ENCODE measurements at regions of chr5 and their contacts with region 1.

Region 1: GRCh38 chr5:143968011-143968878 is 156.3 kb downstream of the HMHB1 start:
- DNase-seq: peak; percentile 34
- ATAC-seq: peak; percentile 86
- H3K4me3 ChIP-seq: no peak overlapping the region
- H3K27ac ChIP-seq: no peak overlapping the region
- H3K4me1 ChIP-seq: no peaks in the 10 kb centered on the region
- H3K27me3 ChIP-seq: no peaks in the 10 kb centered on the region; a peak in 1 of 4 replicates
- CTCF ChIP-seq: peak; percentile 46 to 63 (median 56); a peak in 5 of 6 replicates
- EP300 ChIP-seq: no peak
- POLR2A ChIP-seq: no peak
- RAD21 ChIP-seq: peak; percentile 69

Region 2: GRCh38 chr5:142915813-142916424 is 1052.3 kb before region 1 on chr5:
- CTCF ChIA-PET with region 1: interaction called, 31 read pairs
- POLR2A ChIA-PET with region 1: no interaction called
- RAD21 ChIA-PET with region 1: no interaction called
- SMC1A ChIA-PET with region 1: interaction called, 11 read pairs
- in situ Hi-C with region 1: loop called (anchors 5 kb)
- intact Hi-C with region 1: loop called (anchors 5 kb)
- DNase-seq: peak; percentile 51
- ATAC-seq: peak; percentile 99
- H3K4me3 ChIP-seq: no peak overlapping the region
- H3K27ac ChIP-seq: no peak overlapping the region
- H3K4me1 ChIP-seq: peaks cover 11% of the 10 kb centered on the region; the same call in 1 of the 2 replicates
- H3K27me3 ChIP-seq: no peaks in the 10 kb centered on the region
- CTCF ChIP-seq: peak; percentile 66 to 75 (median 70)
- EP300 ChIP-seq: peak in 1 of 2 experiments; percentile 54; a peak in 1 of 4 replicates
- POLR2A ChIP-seq: no peak
- RAD21 ChIP-seq: peak; percentile 62

Region 3: GRCh38 chr5:143314659-143315058 is 653.6 kb before region 1 on chr5:
- CTCF ChIA-PET with region 1: interaction called, 3 read pairs
- POLR2A ChIA-PET with region 1: no interaction called
- RAD21 ChIA-PET with region 1: no interaction called
- SMC1A ChIA-PET with region 1: no interaction called
- in situ Hi-C with region 1: no loop called
- intact Hi-C with region 1: loop called (anchors 2 kb)
- DNase-seq: no peak
- ATAC-seq: peak; percentile 61
- H3K4me3 ChIP-seq: no peak overlapping the region
- H3K27ac ChIP-seq: 0 out of 2 replicates have a peak overlapping the region, but pooled peaks have one; percentile 7
- H3K4me1 ChIP-seq: peaks cover 16% of the 10 kb centered on the region; the same call in 1 of the 2 replicates
- H3K27me3 ChIP-seq: no peaks in the 10 kb centered on the region
- CTCF ChIP-seq: no peak
- EP300 ChIP-seq: no peak
- POLR2A ChIP-seq: no peak
- RAD21 ChIP-seq: no peak

Region 4: GRCh38 chr5:143648696-143649095 is 319.5 kb before region 1 on chr5:
- CTCF ChIA-PET with region 1: interaction called, 3 read pairs
- POLR2A ChIA-PET with region 1: no interaction called
- RAD21 ChIA-PET with region 1: no interaction called
- SMC1A ChIA-PET with region 1: no interaction called
- in situ Hi-C with region 1: no loop called
- intact Hi-C with region 1: loop called (anchors 10 kb)
- DNase-seq: no peak
- ATAC-seq: 0 out of 3 replicates have a peak, but pooled peaks have one; percentile 10
- H3K4me3 ChIP-seq: no peak overlapping the region
- H3K27ac ChIP-seq: no peak overlapping the region
- H3K4me1 ChIP-seq: peaks cover 4% of the 10 kb centered on the region; the same call in 1 of the 2 replicates
- H3K27me3 ChIP-seq: no peaks in the 10 kb centered on the region
- CTCF ChIP-seq: peak in 2 of 3 experiments; percentile 16 to 22; a peak in 2 of 6 replicates
- EP300 ChIP-seq: no peak
- POLR2A ChIP-seq: no peak
- RAD21 ChIP-seq: peak; percentile 34; the same call in 1 of the 2 replicates

Region 5: DNA sequence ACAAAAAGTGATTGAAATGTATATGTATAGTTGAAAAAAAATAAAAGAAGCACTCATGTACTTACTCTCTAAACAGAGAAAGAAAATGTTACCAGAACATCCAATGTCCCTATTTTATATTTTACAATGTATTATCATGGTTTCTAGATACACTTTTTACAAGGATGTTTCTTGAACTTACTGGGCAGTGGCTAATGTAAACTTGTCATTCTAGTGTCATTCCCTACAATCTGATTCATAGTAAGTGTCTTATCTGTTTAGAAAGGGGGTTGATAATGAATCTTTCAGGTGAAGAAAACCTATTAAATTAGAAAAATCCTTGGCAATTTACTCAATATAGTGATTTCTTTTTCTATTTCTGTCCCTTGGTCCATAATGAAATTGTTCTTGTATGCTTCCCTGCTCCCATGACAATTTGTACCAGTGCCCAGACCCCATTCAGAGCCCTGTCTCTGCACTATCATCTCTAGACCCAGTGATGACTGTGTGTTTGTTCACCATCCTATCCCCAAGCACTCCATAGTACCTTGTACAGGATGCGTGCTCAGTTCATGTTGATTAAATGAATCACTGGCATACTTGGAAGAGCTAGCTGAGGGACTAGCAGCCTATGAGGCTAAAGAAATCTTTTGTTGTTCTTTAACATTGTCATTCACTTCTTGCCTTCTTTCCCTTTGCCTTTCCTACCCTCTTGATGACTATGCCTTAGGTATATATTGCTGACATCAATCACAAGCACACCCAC is 55.1 kb before region 1 on chr5:
- CTCF ChIA-PET with region 1: no interaction called
- POLR2A ChIA-PET with region 1: no interaction called
- RAD21 ChIA-PET with region 1: no interaction called
- SMC1A ChIA-PET with region 1: no interaction called
- in situ Hi-C with region 1: no loop called
- intact Hi-C with region 1: no loop called
- DNase-seq: no peak
- ATAC-seq: no peak
- H3K4me3 ChIP-seq: no peak overlapping the region
- H3K27ac ChIP-seq: no peak overlapping the region
- H3K4me1 ChIP-seq: no peaks in the 10 kb centered on the region
- H3K27me3 ChIP-seq: no peaks in the 10 kb centered on the region
- CTCF ChIP-seq: no peak
- EP300 ChIP-seq: no peak
- POLR2A ChIP-seq: no peak
- RAD21 ChIP-seq: no peak

Region 6: DNA sequence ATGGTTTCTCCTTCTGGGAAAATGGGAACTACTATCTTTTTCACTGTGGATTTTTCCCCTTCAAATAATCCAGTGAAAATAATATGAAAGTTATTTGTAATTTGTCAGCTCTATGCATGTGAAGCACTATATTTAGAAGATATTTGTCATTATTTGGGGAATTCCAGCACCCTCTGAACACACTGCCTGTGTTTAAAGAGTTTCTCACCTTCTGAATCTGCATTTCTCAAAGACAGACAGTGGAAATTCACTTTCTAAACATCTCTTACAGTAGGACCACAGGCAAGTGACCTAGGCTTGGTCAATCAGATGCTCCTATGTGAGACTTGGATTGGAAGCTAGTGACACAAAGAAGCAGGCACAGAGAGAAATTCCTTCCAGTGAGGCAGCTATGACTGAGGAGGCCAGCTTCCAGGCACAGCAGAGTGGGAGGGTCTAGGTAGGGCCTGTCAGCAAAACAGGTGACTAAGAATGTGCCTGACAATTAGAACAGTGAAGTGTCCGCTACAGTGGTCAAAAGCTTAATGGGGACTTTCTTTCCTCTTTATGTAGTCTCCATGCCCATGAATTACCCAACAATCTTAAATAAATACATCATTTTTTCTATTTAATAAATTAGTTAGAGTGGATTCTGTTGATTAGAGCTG is 10.9 kb after region 1 on chr5:
- CTCF ChIA-PET with region 1: interaction called, 34 read pairs
- POLR2A ChIA-PET with region 1: interaction called, 6 read pairs
- RAD21 ChIA-PET with region 1: interaction called, 23 read pairs
- SMC1A ChIA-PET with region 1: interaction called, 28 read pairs
- in situ Hi-C with region 1: no loop called
- intact Hi-C with region 1: no loop called
- DNase-seq: no peak
- ATAC-seq: peak; percentile 92
- H3K4me3 ChIP-seq: no peak overlapping the region
- H3K27ac ChIP-seq: peak overlapping the region; percentile 6; the same call in 1 of the 2 replicates
- H3K4me1 ChIP-seq: no peaks in the 10 kb centered on the region
- H3K27me3 ChIP-seq: no peaks in the 10 kb centered on the region
- CTCF ChIP-seq: no peak
- EP300 ChIP-seq: 0 out of 4 replicates have a peak, but pooled peaks of 1 of the 2 experiments have one; percentile 11
- POLR2A ChIP-seq: no peak
- RAD21 ChIP-seq: no peak

Region 7: DNA sequence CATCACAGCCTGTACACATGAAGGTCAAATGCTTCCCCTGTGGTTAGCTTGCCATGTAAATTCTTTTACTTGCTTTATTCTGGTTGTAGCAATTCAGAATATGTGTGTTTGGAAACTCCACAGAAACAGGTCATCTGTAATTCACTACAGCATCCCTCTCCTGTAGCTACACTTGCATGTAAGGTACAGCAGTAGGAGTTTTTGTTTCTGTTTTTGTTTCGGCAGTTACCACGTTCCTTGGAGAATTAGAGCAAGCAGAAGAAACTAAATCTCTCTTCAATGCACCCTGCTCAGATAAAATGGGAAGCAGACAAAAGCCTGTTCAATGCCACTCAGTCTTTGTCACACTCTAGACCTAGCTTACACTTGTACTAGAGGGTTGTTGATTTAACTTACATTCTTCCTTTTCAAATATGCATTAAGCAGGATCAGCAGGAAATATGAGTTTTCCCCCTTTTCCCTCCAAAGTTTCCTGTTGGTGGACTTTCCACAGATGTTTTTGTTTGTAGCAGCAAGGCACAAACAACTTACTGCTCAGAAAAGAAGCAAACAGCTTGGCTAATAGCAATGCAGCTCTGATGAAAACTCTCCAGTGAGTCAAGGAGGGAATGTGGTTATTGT is 121.3 kb after region 1 on chr5:
- CTCF ChIA-PET with region 1: no interaction called
- POLR2A ChIA-PET with region 1: no interaction called
- RAD21 ChIA-PET with region 1: no interaction called
- SMC1A ChIA-PET with region 1: no interaction called
- in situ Hi-C with region 1: no loop called
- intact Hi-C with region 1: no loop called
- DNase-seq: no peak
- ATAC-seq: peak; percentile 24
- H3K4me3 ChIP-seq: no peak overlapping the region
- H3K27ac ChIP-seq: no peak overlapping the region
- H3K4me1 ChIP-seq: no peaks in the 10 kb centered on the region
- H3K27me3 ChIP-seq: no peaks in the 10 kb centered on the region
- CTCF ChIP-seq: no peak
- EP300 ChIP-seq: no peak
- POLR2A ChIP-seq: no peak
- RAD21 ChIP-seq: no peak

Region 8: GRCh38 chr5:144142139-144142823 is 174.0 kb after region 1 on chr5:
- CTCF ChIA-PET with region 1: interaction called, 10 read pairs
- POLR2A ChIA-PET with region 1: no interaction called
- RAD21 ChIA-PET with region 1: interaction called, 6 read pairs
- SMC1A ChIA-PET with region 1: interaction called, 9 read pairs
- in situ Hi-C with region 1: no loop called
- intact Hi-C with region 1: loop called (anchors 5 kb)
- DNase-seq: peak; percentile 25
- ATAC-seq: peak; percentile 99
- H3K4me3 ChIP-seq: no peak overlapping the region
- H3K27ac ChIP-seq: no peak overlapping the region
- H3K4me1 ChIP-seq: peaks cover 11% of the 10 kb centered on the region
- H3K27me3 ChIP-seq: no peaks in the 10 kb centered on the region; a peak in 1 of 4 replicates
- CTCF ChIP-seq: peak; percentile 64 to 71 (median 69)
- EP300 ChIP-seq: no peak
- POLR2A ChIP-seq: no peak
- RAD21 ChIP-seq: peak; percentile 83

Region 9: DNA sequence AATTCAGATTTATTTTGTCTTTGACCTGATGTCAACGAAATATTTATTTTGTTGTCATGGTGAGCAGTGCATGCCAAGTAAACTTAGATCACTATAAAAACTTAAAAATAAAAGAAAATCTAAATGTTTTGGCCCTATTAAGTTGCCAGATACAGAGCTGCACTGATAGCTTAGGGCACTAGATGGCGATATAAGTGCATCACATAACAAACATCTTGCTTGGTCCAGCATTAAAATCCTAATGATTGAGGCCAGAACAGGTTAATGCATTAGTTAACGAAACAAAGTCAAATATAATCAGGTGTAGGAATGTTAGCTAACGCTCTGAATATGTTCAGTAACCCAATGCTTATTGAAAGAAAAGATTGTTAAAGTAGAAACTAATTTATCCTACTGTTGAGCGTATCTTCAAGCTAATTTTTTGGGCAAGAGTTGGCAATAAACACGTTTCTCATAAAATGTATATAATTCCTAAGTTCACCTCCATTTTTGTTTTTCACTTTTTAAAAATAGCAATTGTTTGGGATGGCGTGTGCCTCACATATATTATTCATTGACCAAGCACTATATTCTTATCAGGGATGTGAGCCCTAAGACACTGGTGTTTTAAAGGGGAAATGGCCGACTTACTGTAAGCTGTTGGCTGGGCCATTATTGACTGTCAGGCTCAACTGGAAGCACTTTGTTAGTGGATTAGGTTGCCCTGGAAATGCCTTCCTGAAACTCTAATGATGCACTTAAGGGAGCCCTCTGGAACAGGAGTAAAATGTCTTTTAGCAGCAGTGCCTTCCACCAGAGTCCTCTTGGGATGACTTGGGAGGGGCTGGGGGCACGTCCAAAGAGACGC is 235.7 kb after region 1 on chr5:
- CTCF ChIA-PET with region 1: no interaction called
- POLR2A ChIA-PET with region 1: no interaction called
- RAD21 ChIA-PET with region 1: no interaction called
- SMC1A ChIA-PET with region 1: no interaction called
- in situ Hi-C with region 1: no loop called
- intact Hi-C with region 1: no loop called
- DNase-seq: no peak
- ATAC-seq: peak; percentile 92
- H3K4me3 ChIP-seq: no peak overlapping the region
- H3K27ac ChIP-seq: no peak overlapping the region
- H3K4me1 ChIP-seq: no peaks in the 10 kb centered on the region
- H3K27me3 ChIP-seq: peaks cover 1 to 11% of the 10 kb centered on the region in 2 experiments
- CTCF ChIP-seq: peak; percentile 77 to 82 (median 80)
- EP300 ChIP-seq: no peak
- POLR2A ChIP-seq: no peak
- RAD21 ChIP-seq: peak; percentile 92

Measured in GM12878 (cell line).